ENCODE measurements at regions of chr7 and their contacts with region 1.

Region 1: DNA sequence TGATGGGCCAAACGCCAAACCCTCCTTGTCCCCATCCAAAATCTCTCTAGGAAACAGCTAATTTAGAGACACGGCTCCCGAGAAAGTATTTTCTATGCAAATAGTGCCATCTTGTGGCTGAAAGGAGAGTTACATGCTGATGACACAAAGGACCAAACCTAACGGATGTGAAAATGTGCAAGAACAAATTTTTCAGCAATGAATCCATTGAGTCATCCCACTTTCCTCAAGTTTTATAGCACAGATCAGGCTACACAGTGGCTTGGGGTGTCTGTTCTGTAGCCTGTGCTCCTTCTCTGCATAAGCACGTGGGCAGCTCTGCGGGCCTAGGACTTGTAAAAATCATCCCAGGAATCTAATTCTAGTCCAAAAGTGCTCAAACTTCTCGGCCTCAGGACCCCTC is 154.8 kb upstream of the PRR15 start:
- DNase-seq: peak in 2 of 5 donors; percentile 45 to 49
- ATAC-seq: peak; percentile 14 to 66 (median 64)
- H3K4me3 ChIP-seq: no peak overlapping the region
- H3K27ac ChIP-seq: no peak overlapping the region
- H3K4me1 ChIP-seq: no peaks in the 10 kb centered on the region
- H3K27me3 ChIP-seq: no peaks in the 10 kb centered on the region
- CTCF ChIP-seq: peak; percentile 71 to 89 (median 83)
- POLR2A ChIP-seq: no peak

Region 2: DNA sequence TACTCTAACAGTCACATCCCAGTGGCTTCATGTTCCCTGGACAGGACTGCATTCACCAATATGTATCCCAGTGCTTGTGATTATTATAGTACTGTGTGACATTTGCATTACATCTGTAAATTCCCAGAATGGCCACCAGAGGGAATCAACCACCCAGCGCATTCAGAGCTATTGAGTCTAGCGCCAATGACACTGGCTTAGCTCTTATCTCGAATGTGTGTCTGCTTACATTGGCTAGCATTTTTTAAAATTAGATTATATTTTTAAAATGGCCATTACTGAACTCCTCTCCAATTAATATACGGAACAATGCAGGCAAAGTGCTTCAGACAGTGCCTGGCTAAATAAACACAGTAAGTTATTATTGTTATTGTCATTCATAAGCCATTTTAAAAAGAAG is 487.0 kb before region 1 on chr7:
- intact Hi-C with region 1: loop called (anchors 1 to 5 kb)
- DNase-seq: peak in 3 of 5 donors; percentile 42 to 45 (median 44)
- ATAC-seq: peak; percentile 88 to 95 (median 92)
- H3K4me3 ChIP-seq: no peak overlapping the region
- H3K27ac ChIP-seq: no peak overlapping the region
- H3K4me1 ChIP-seq: peaks cover 0 to 22% (median 12%) of the 10 kb centered on the region in 12 donors
- H3K27me3 ChIP-seq: peaks cover 0 to 8% (median 0%) of the 10 kb centered on the region in 9 donors
- CTCF ChIP-seq: peak; percentile 72 to 94 (median 85)
- POLR2A ChIP-seq: no peak

Region 3: GRCh38 chr7:28926871-28927597 is 481.8 kb before region 1 on chr7:
- intact Hi-C with region 1: loop called (anchors 1 to 5 kb)
- DNase-seq: peak; percentile 76 to 82 (median 79)
- ATAC-seq: peak; percentile 78 to 95 (median 94)
- H3K4me3 ChIP-seq: peak overlapping the region; percentile 8 to 64 (median 52)
- H3K27ac ChIP-seq: peak overlapping the region in 11 of 12 donors; percentile 15 to 63 (median 49)
- H3K4me1 ChIP-seq: peaks cover 0 to 22% (median 15%) of the 10 kb centered on the region in 12 donors
- H3K27me3 ChIP-seq: peaks cover 0 to 8% (median 0%) of the 10 kb centered on the region in 9 donors
- CTCF ChIP-seq: peak; percentile 72 to 90 (median 84)
- POLR2A ChIP-seq: no peak

Region 4: GRCh38 chr7:29105752-29106668 is 302.8 kb before region 1 on chr7:
- intact Hi-C with region 1: loop called in 9 of 10 experiments (anchors 2 to 5 kb)
- DNase-seq: peak in 2 of 5 donors; percentile 53
- ATAC-seq: peak; percentile 70 to 81 (median 80)
- H3K4me3 ChIP-seq: no peak overlapping the region
- H3K27ac ChIP-seq: no peak overlapping the region
- H3K4me1 ChIP-seq: peaks cover 0 to 30% (median 5%) of the 10 kb centered on the region in 12 donors
- H3K27me3 ChIP-seq: no peaks in the 10 kb centered on the region
- CTCF ChIP-seq: peak; percentile 68 to 91 (median 85)
- POLR2A ChIP-seq: no peak

Region 5: DNA sequence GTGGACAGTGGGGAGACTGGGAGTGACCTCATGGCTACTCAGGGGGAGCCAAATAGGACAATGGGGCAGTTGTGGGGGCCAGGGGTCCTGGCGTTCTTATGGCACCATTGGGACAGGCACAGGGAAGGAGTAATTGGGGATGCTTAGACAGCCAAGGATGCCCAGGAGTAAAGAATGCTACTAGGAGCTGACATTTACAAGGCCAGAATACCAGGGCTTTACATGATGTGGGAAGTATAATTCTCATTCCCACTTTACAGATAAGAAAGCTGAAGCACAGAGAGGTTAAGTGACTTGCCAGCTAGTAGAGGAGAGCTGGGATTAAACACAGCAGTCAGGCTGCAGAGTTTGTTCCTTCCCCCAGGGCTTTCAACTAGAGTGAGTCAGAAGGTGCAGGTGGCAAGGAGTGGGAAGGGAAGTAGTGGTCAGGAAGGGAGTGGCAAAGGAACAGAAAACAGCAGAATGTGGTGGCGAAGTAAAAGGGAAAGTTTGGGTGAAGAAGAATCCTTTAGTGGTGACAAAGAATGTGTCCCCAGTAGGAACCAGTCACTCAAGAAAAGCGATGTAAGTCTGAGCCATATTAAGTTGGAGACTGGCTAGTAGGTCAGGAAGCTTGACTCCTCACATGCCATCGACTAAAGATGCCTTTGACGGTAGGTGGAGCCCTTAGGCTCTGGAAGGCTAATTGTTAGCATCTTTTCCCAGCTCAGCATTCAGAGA is 295.3 kb before region 1 on chr7:
- intact Hi-C with region 1: loop called in 9 of 10 experiments (anchors 5 kb)
- DNase-seq: no peak
- ATAC-seq: peak; percentile 23 to 60 (median 34)
- H3K4me3 ChIP-seq: no peak overlapping the region
- H3K27ac ChIP-seq: no peak overlapping the region
- H3K4me1 ChIP-seq: peaks cover 0 to 48% (median 10%) of the 10 kb centered on the region in 12 donors
- H3K27me3 ChIP-seq: no peaks in the 10 kb centered on the region
- CTCF ChIP-seq: peak in 10 of 12 donors; percentile 5 to 41 (median 24)
- POLR2A ChIP-seq: no peak

Region 6: GRCh38 chr7:29119538-29120199 is 289.2 kb before region 1 on chr7:
- intact Hi-C with region 1: loop called in 3 of 10 experiments (anchors 5 kb)
- DNase-seq: no peak
- ATAC-seq: no peak
- H3K4me3 ChIP-seq: no peak overlapping the region
- H3K27ac ChIP-seq: no peak overlapping the region
- H3K4me1 ChIP-seq: peaks cover 0 to 38% (median 18%) of the 10 kb centered on the region in 12 donors
- H3K27me3 ChIP-seq: no peaks in the 10 kb centered on the region
- CTCF ChIP-seq: no peak
- POLR2A ChIP-seq: no peak

Measured in heart left ventricle (tissue), 16 donors.